HCT116 (cell line): ENCODE measurements at regions of chr7 and their contacts with region 1.

Region 1: DNA sequence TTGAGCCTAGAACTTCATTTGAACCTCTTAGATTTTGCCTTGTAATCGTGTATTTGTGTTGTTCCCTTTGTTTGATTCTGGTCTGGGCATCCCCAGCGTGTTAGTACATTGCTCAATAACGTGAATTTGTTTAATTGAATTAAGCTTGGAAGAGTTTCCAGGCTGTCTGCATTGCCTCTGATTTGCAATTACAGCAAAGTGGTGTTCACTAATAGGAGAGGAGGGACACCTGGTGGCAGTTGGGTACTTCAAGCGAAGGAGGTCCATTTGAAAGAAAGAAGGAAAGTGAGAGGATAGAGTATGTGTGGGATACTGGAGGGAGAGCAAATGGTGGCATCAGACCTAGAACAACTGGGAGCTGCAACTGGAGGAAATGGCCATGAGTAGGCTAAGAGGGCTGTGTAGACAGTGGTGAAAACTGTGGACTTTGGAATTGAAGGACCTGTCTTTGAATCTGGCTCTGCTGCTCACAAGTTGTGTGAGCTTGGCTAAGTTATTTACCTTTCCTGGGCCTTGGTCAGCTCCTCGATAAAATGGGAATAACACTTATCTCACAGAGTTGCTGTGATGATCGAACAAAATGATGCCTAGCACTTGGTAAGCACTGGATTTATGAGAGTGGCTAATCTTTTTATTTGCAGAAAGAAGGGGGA is 15.1 kb downstream of the LSMEM1 start:
- DNase-seq: peak; percentile 65
- ATAC-seq: peak; percentile 98
- H3K4me3 ChIP-seq: no peak overlapping the region
- H3K27ac ChIP-seq: no peak overlapping the region
- H3K4me1 ChIP-seq: no peaks in the 10 kb centered on the region
- H3K27me3 ChIP-seq: no peaks in the 10 kb centered on the region
- CTCF ChIP-seq: peak; percentile 60 to 89 (median 83)
- POLR2A ChIP-seq: no peak
- RAD21 ChIP-seq: peak; percentile 95

Region 2: GRCh38 chr7:111741811-111742240 is 754.1 kb before region 1 on chr7:
- CTCF ChIA-PET with region 1: interaction called, 8 read pairs
- POLR2A ChIA-PET with region 1: no interaction called
- RAD21 ChIA-PET with region 1: interaction called in 1 of 2 experiments, 3 read pairs
- intact Hi-C with region 1: loop called (anchors 2 kb)
- DNase-seq: peak; percentile 75
- ATAC-seq: peak; percentile 96
- H3K4me3 ChIP-seq: no peak overlapping the region
- H3K27ac ChIP-seq: no peak overlapping the region
- H3K4me1 ChIP-seq: no peaks in the 10 kb centered on the region
- H3K27me3 ChIP-seq: no peaks in the 10 kb centered on the region
- CTCF ChIP-seq: peak; percentile 60 to 86 (median 81)
- POLR2A ChIP-seq: no peak
- RAD21 ChIP-seq: peak; percentile 85

Region 3: GRCh38 chr7:111763221-111763801 is 732.6 kb before region 1 on chr7:
- CTCF ChIA-PET with region 1: interaction called, 23 read pairs
- POLR2A ChIA-PET with region 1: no interaction called
- RAD21 ChIA-PET with region 1: interaction called in 1 of 2 experiments, 4 read pairs
- intact Hi-C with region 1: loop called (anchors 1 kb)
- DNase-seq: peak; percentile 57
- ATAC-seq: peak; percentile 91
- H3K4me3 ChIP-seq: no peak overlapping the region
- H3K27ac ChIP-seq: no peak overlapping the region
- H3K4me1 ChIP-seq: no peaks in the 10 kb centered on the region
- H3K27me3 ChIP-seq: no peaks in the 10 kb centered on the region
- CTCF ChIP-seq: peak; percentile 55 to 86 (median 62)
- POLR2A ChIP-seq: no peak
- RAD21 ChIP-seq: peak; percentile 73

Region 4: GRCh38 chr7:111855161-111855856 is 640.6 kb before region 1 on chr7:
- CTCF ChIA-PET with region 1: interaction called, 8 read pairs
- POLR2A ChIA-PET with region 1: no interaction called
- RAD21 ChIA-PET with region 1: no interaction called
- intact Hi-C with region 1: loop called (anchors 5 kb)
- DNase-seq: peak; percentile 38
- ATAC-seq: peak; percentile 96
- H3K4me3 ChIP-seq: no peak overlapping the region
- H3K27ac ChIP-seq: no peak overlapping the region
- H3K4me1 ChIP-seq: no peaks in the 10 kb centered on the region
- H3K27me3 ChIP-seq: no peaks in the 10 kb centered on the region
- CTCF ChIP-seq: peak; percentile 46 to 70 (median 63); a peak in 5 of 6 replicates
- POLR2A ChIP-seq: no peak
- RAD21 ChIP-seq: peak; percentile 57

Region 5: GRCh38 chr7:112422842-112423496 is 73.0 kb before region 1 on chr7:
- CTCF ChIA-PET with region 1: no interaction called
- POLR2A ChIA-PET with region 1: no interaction called
- RAD21 ChIA-PET with region 1: no interaction called
- intact Hi-C with region 1: loop called (anchors 5 kb)
- DNase-seq: peak; percentile 63
- ATAC-seq: peak; percentile 92
- H3K4me3 ChIP-seq: no peak overlapping the region; a peak in 1 of 4 replicates
- H3K27ac ChIP-seq: peak overlapping the region; percentile 23
- H3K4me1 ChIP-seq: peaks cover 22 to 25% of the 10 kb centered on the region in 2 experiments
- H3K27me3 ChIP-seq: no peaks in the 10 kb centered on the region
- CTCF ChIP-seq: no peak
- POLR2A ChIP-seq: no peak
- RAD21 ChIP-seq: 0 out of 2 replicates have a peak, but pooled peaks have one; percentile 3

Region 6: GRCh38 chr7:112481833-112482670 is 13.9 kb before region 1 on chr7:
- CTCF ChIA-PET with region 1: interaction called, 17 read pairs
- POLR2A ChIA-PET with region 1: no interaction called
- RAD21 ChIA-PET with region 1: no interaction called
- intact Hi-C with region 1: no loop called
- DNase-seq: peak; percentile 50
- ATAC-seq: peak; percentile 62
- H3K4me3 ChIP-seq: no peak overlapping the region
- H3K27ac ChIP-seq: no peak overlapping the region
- H3K4me1 ChIP-seq: peaks cover 29 to 41% of the 10 kb centered on the region in 2 experiments
- H3K27me3 ChIP-seq: no peaks in the 10 kb centered on the region
- CTCF ChIP-seq: no peak
- POLR2A ChIP-seq: no peak
- RAD21 ChIP-seq: no peak

Region 7: GRCh38 chr7:112898432-112899290 is 402.7 kb after region 1 on chr7:
- CTCF ChIA-PET with region 1: no interaction called
- POLR2A ChIA-PET with region 1: no interaction called
- RAD21 ChIA-PET with region 1: no interaction called
- intact Hi-C with region 1: loop called (anchors 1 kb)
- DNase-seq: peak; percentile 51
- ATAC-seq: peak; percentile 95
- H3K4me3 ChIP-seq: no peak overlapping the region
- H3K27ac ChIP-seq: no peak overlapping the region
- H3K4me1 ChIP-seq: no peaks in the 10 kb centered on the region
- H3K27me3 ChIP-seq: no peaks in the 10 kb centered on the region
- CTCF ChIP-seq: peak; percentile 62 to 89 (median 81); a peak in 5 of 6 replicates
- POLR2A ChIP-seq: no peak
- RAD21 ChIP-seq: peak; percentile 86